ENCODE measurements at regions of chr6 and their contacts with region 1.

Region 1: GRCh38 chr6:26003102-26003694 is 40.6 kb downstream of the TRIM38 start:
- DNase-seq: peak in 1 of 2 experiments; percentile 61
- H3K4me3 ChIP-seq: no peak overlapping the region
- H3K27ac ChIP-seq: no peak overlapping the region
- H3K4me1 ChIP-seq: no peaks in the 10 kb centered on the region
- H3K27me3 ChIP-seq: no peaks in the 10 kb centered on the region
- CTCF ChIP-seq: peak; percentile 87

Region 2: GRCh38 chr6:24689964-24690363 is 1313.2 kb before region 1 on chr6:
- CTCF ChIA-PET with region 1: no interaction called
- POLR2A ChIA-PET with region 1: interaction called, 10 read pairs
- intact Hi-C with region 1: no loop called
- DNase-seq: no peak
- H3K4me3 ChIP-seq: no peak overlapping the region
- H3K27ac ChIP-seq: no peak overlapping the region
- H3K4me1 ChIP-seq: peaks cover 11% of the 10 kb centered on the region
- H3K27me3 ChIP-seq: no peaks in the 10 kb centered on the region
- CTCF ChIP-seq: no peak

Region 3: DNA sequence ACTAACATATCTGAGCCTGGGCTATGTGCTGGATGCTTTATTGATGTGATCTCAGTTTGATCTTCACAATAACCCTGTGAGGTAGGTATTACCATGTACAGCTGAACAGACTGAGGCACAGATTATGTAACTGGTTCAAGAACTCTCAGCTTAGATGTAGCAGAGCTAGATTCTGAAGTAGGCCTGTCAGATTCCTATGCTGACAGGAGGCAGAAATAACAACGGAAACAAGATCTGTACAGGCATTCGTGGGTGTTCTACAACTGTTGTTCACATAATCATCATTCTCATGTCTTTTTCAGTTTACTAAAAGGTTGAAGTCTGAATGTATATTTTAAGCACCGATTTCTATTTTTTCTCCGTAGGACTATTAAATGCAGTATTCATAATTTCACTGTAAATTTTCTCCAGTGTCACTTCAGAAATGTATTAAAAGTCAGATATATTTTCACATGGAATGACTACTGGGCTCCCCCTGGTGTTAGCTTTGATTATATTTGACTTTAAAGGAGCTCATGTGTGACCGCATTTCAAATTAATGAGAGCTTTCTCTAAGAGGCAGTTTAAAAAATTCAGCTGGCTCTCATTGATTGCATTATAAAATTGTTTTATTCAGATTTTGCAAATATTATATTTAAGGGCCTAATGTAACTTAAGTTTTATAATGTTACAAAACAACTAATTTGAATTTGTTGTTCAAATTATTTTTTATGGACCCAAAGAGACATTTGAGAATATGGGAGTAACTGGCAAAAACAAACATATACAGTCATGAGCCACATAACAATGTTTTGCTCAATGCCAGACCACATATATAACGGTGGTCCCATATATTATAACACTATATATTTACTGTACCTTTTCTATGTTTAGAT is 285.1 kb before region 1 on chr6:
- CTCF ChIA-PET with region 1: no interaction called
- POLR2A ChIA-PET with region 1: no interaction called
- intact Hi-C with region 1: loop called (anchors 5 kb)
- DNase-seq: no peak
- H3K4me3 ChIP-seq: no peak overlapping the region
- H3K27ac ChIP-seq: no peak overlapping the region
- H3K4me1 ChIP-seq: no peaks in the 10 kb centered on the region
- H3K27me3 ChIP-seq: no peaks in the 10 kb centered on the region
- CTCF ChIP-seq: peak; percentile 83

Region 4: GRCh38 chr6:25788305-25788922 is 214.8 kb before region 1 on chr6:
- CTCF ChIA-PET with region 1: interaction called, 3 read pairs
- POLR2A ChIA-PET with region 1: no interaction called
- intact Hi-C with region 1: loop called (anchors 2 kb)
- DNase-seq: peak; percentile 33 to 41
- H3K4me3 ChIP-seq: no peak overlapping the region
- H3K27ac ChIP-seq: no peak overlapping the region
- H3K4me1 ChIP-seq: no peaks in the 10 kb centered on the region
- H3K27me3 ChIP-seq: no peaks in the 10 kb centered on the region
- CTCF ChIP-seq: peak; percentile 66

Region 5: GRCh38 chr6:25889877-25890853 is 113.0 kb before region 1 on chr6:
- CTCF ChIA-PET with region 1: no interaction called
- POLR2A ChIA-PET with region 1: no interaction called
- intact Hi-C with region 1: loop called (anchors 2 kb)
- DNase-seq: peak; percentile 42
- H3K4me3 ChIP-seq: no peak overlapping the region
- H3K27ac ChIP-seq: no peak overlapping the region
- H3K4me1 ChIP-seq: no peaks in the 10 kb centered on the region
- H3K27me3 ChIP-seq: no peaks in the 10 kb centered on the region
- CTCF ChIP-seq: peak; percentile 72

Region 6: DNA sequence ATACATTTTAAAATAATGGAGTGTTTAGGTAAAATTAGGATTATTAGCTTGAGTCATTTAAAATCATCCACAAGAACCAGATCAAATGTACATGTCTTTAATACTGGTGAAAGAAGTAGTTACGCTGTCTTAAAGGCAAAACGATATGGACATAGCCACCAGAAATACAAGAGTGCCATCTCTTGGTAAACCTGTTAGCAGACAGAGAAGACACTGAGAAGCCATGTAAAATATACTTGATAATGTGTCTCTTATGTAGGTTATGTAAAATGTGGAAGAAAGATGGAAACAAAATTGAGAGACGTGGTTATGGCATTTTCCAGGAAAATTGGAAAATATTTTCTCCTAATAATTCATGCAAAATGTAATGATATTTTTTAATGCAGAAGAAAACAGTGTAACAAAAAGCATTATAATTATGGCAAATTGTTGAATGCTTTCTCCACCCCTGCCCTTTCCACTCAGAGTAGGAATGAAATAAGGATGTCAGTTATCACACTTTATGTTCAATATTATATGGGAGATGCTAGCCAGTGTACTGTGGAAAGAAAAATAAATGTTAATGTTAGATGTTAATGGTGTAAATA is 60.5 kb before region 1 on chr6:
- CTCF ChIA-PET with region 1: no interaction called
- POLR2A ChIA-PET with region 1: no interaction called
- intact Hi-C with region 1: no loop called
- DNase-seq: no peak
- H3K4me3 ChIP-seq: no peak overlapping the region
- H3K27ac ChIP-seq: no peak overlapping the region
- H3K4me1 ChIP-seq: no peaks in the 10 kb centered on the region
- H3K27me3 ChIP-seq: no peaks in the 10 kb centered on the region
- CTCF ChIP-seq: peak; percentile 61; the same call in 1 of the 2 replicates

Region 7: GRCh38 chr6:26031595-26032339 is 28.6 kb after region 1 on chr6:
- CTCF ChIA-PET with region 1: interaction called, 3 read pairs
- POLR2A ChIA-PET with region 1: interaction called, 12 read pairs
- intact Hi-C with region 1: no loop called
- DNase-seq: peak; percentile 91 to 95
- H3K4me3 ChIP-seq: peak overlapping the region; percentile 81
- H3K27ac ChIP-seq: peak overlapping the region; percentile 79
- H3K4me1 ChIP-seq: peaks cover 46% of the 10 kb centered on the region
- H3K27me3 ChIP-seq: no peaks in the 10 kb centered on the region
- CTCF ChIP-seq: no peak

Region 8: DNA sequence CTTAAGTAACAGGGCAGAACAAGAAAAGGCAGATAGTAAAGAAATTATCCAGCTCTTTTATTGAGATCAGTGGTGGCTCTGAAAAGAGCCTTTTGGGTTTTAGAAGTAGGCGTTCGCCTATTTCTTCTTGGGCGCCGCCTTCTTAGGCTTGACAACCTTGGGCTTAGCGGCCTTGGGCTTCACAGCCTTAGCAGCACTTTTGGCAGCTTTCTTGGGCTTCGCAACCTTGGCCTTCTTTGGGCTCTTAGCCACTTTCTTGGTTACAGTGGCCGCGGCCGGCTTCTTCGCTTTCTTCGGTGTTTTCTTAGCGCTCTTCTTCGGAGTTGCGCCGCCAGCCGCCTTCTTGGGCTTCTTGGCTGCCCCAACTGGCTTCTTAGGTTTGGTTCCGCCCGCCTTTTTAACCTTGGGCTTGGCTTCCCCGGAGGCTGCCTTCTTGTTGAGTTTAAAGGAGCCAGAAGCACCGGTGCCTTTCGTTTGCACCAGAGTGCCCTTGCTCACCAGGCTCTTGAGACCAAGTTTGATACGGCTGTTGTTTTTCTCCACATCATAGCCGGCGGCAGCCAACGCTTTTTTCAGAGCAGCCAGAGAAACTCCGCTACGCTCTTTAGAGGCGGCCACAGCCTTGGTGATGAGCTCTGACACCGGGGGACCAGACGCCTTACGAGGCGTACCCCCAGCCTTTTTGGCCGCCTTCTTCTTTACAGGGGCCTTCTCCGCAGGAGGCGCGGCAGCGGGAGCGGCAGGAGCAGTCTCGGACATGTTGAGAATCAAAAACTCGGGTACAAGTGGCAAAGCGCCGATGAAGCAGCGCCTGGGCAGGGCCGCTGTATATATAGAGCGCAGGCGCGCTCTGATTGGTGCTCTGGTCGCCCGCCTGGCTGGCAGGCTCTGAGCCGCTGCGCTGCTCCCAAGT is 52.7 kb after region 1 on chr6:
- CTCF ChIA-PET with region 1: no interaction called
- POLR2A ChIA-PET with region 1: no interaction called
- intact Hi-C with region 1: no loop called
- DNase-seq: peak; percentile 68 to 92
- H3K4me3 ChIP-seq: peak overlapping the region; percentile 79
- H3K27ac ChIP-seq: peak overlapping the region; percentile 95
- H3K4me1 ChIP-seq: peaks cover 26% of the 10 kb centered on the region
- H3K27me3 ChIP-seq: no peaks in the 10 kb centered on the region
- CTCF ChIP-seq: no peak

Region 9: GRCh38 chr6:27273783-27274182 is 1270.6 kb after region 1 on chr6:
- CTCF ChIA-PET with region 1: no interaction called
- POLR2A ChIA-PET with region 1: interaction called, 10 read pairs
- intact Hi-C with region 1: no loop called
- DNase-seq: no peak
- H3K4me3 ChIP-seq: no peak overlapping the region
- H3K27ac ChIP-seq: no peak overlapping the region
- H3K4me1 ChIP-seq: 0 out of 2 replicates have a peak, but pooled peaks cover 5% of the 10 kb centered on the region
- H3K27me3 ChIP-seq: no peaks in the 10 kb centered on the region
- CTCF ChIP-seq: no peak